Posterior cingulate gyrus (tissue), 11 donors: ENCODE measurements at regions of chr4 and their contacts with region 1.

Region 1: DNA sequence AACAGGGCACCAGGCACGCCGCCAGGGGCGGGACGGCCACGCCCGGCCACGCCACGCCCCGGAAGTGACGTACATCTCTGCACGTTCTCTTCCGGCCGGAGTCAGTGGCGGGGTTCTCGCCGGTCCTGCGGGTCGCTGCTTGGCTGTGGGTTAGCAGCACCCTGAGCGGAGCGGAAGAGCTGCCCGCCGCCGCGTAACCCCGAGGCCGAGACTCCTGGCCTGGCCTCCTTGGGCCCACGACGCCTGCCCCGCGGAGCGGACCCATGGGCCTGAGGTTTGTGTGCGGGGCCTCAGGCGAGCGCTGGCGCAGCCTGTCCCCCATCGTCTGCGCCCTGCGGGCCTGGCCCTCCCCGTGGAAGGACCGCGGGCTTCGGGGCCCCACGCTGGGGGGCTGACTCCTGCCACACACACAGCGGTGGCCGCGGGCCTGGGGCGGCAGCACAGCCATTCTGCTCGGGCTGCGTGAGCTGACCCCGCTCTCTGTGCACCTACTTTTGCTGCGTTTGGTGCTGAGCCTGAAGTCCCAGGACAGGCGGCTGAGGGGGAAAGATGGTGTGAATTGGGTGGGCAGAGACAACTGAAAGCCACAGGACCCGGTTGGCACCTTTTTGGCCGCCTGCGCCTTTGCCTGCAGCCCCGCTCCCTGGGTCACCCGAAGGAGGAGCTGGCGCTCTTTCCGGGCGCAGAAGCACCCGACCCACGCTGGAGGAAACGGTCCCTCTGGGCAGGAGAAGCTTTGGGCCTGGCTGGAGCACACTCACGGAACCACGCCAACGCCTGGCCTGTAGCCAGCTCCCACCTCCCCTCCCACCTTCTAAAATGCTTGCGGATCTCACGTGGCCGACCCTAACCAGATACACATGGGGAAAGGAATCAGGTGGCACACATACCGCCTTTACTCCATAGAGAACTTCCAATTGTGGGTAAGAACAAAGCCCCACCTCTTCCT is 28.1 kb downstream of the NOP14 start:
- DNase-seq: peak; percentile 81 to 98 (median 90)

Region 2: GRCh38 chr4:2761035-2761923 is 173.8 kb before region 1 on chr4:
- intact Hi-C with region 1: loop called (anchors 10 kb)
- DNase-seq: peak in 2 of 10 donors; percentile 54 to 67

Region 3: GRCh38 chr4:2862528-2862927 is 72.6 kb before region 1 on chr4:
- intact Hi-C with region 1: no loop called
- DNase-seq: no peak

Region 4: GRCh38 chr4:3193531-3194203 is 258.6 kb after region 1 on chr4:
- intact Hi-C with region 1: no loop called
- DNase-seq: no peak